Activated T-helper 1 cell treated with anti-CD3 and anti-CD28 coated beads, Interleukin-12 subunit alpha, Interleukin-12 subunit beta, Interleukin-2, Interleukin-4 antibody, amounts not matched to agents 30 ng/mL and 10 ng/mL and 1 ng/mL, durations not matched to agents 14 hours and 24 hours and 36 hours (primary cell): ENCODE measurements at regions of chr11 and their contacts with region 1.

Region 1: GRCh38 chr11:27158722-27159679 is 118.4 kb downstream of the BBOX1 start:
- DNase-seq: no peak
- H3K4me3 Mint-ChIP-seq: no peak overlapping the region
- H3K27ac Mint-ChIP-seq: no peak overlapping the region
- H3K4me1 Mint-ChIP-seq: no peaks in the 10 kb centered on the region
- H3K27me3 Mint-ChIP-seq: peaks cover 1% of the 10 kb centered on the region

Region 2: DNA sequence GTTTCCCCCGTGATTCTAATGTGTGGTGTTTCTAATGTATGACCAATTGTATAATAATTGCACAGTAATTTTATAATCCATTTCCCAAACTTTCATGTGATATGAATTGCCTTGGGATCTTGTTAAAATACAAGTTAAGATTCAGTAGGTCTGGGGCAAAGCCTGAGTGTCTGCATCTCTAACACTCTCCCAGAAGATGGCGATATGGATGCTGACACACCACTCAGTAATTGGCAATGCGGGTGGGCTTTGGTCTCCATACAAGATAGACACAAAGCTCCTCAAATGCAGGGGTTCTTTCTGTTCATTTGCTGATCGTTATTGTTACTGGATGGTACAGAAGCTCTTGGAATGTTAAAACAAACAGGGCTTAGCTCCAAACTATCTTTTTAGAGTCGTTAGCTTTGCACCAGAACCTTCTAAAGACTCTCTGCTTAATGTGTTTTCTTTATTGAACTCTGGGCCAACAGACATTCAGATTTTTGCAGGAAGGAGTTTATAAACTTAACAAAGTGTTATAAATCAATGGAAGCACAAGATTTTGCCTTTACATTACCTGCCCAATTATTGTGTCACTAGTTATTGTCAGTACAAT is 872.4 kb before region 1 on chr11:
- intact Hi-C with region 1: loop called (anchors 10 kb)
- DNase-seq: no peak
- H3K4me3 Mint-ChIP-seq: no peak overlapping the region
- H3K27ac Mint-ChIP-seq: no peak overlapping the region
- H3K4me1 Mint-ChIP-seq: no peaks in the 10 kb centered on the region
- H3K27me3 Mint-ChIP-seq: no peaks in the 10 kb centered on the region

Region 3: DNA sequence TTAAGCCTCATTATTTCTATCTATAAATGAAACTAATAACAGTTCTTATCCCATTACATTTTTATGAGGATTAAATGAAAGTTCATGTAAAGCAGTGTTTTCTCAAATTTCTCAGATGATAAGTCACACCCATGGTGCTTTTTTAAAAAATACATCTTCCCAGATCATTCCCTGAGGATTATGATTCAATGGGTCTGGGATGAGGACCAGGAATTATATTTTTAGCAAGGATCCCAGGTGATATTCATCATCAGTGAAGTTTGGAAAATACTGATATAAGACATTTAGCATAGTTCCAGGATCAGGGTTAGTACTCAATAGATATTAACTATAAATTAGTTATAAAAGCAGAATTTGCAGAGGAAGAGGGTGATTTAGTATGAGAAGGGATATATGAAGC is 29.3 kb before region 1 on chr11:
- intact Hi-C with region 1: no loop called
- DNase-seq: no peak
- H3K4me3 Mint-ChIP-seq: no peak overlapping the region
- H3K27ac Mint-ChIP-seq: no peak overlapping the region
- H3K4me1 Mint-ChIP-seq: no peaks in the 10 kb centered on the region
- H3K27me3 Mint-ChIP-seq: no peaks in the 10 kb centered on the region